BJ (cell line): ENCODE measurements at regions of chr13 and their contacts with region 1.

Region 1: GRCh38 chr13:27826379-27827353 is 34.4 kb downstream of the GSX1 start:
- DNase-seq: peak; percentile 16
- H3K4me3 ChIP-seq: no peak overlapping the region
- H3K27me3 ChIP-seq: peaks cover 7% of the 10 kb centered on the region
- CTCF ChIP-seq: peak; percentile 91

Region 2: DNA sequence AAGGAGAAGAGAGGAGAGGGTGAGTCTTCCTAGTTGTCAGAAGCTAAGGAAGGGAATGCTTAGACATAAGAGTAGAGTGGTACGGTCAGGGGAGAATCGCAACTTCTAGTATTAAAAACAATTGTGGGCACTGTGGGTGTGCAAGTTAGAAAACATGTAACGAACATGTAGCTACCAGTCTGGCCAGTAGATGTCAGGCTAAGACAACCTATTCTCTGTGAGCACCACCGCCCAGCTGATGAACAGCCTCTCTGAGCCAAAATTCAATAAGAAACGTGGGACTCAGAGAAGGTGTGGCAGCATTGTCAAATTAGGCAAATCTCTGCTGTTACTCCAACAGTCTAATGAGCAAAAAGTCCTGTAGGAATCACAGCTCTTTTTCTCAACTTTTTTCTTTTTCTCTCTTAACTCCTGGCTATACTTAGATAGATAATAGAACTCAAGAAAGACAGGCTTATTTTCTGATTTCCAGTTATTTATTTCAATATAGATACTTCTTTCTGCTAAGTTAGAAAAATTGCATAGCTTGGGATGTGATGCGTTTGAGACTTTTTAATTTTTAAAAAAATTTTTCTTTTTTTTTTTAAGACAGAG is 841.3 kb before region 1 on chr13:
- CTCF ChIA-PET with region 1: interaction called, 12 read pairs
- POLR2A ChIA-PET with region 1: no interaction called
- DNase-seq: no peak
- H3K4me3 ChIP-seq: no peak overlapping the region
- H3K27me3 ChIP-seq: no peaks in the 10 kb centered on the region; the same call in 1 of the 2 replicates
- CTCF ChIP-seq: peak; percentile 65

Region 3: GRCh38 chr13:27379694-27380641 is 446.7 kb before region 1 on chr13:
- CTCF ChIA-PET with region 1: interaction called, 168 read pairs
- POLR2A ChIA-PET with region 1: no interaction called
- DNase-seq: no peak
- H3K4me3 ChIP-seq: no peak overlapping the region
- H3K27me3 ChIP-seq: peaks cover 19% of the 10 kb centered on the region
- CTCF ChIP-seq: peak; percentile 68

Region 4: DNA sequence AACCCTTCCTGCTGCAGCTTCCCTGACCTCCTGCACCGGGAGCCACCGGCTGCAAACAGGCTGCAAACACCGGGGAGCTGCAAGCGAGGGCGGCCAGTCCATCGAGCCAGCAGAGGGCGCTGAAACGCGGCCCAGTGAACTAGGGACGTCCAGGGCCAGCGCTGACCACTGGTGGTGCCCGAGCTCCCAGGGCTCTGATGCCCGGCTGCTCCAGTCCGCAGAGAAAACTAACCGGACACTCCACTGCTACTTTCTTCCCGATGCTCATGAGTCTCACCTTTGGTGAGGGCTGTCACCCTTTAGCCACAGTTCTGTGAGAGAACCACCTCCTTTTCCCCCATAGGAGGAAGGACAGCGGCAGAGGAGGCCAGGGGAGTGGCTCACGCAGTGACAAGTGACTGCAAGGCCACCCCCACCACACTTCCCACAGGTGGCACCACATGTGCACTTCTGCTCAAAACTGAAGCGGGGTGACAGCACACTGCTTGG is 293.5 kb before region 1 on chr13:
- CTCF ChIA-PET with region 1: interaction called, 166 read pairs
- POLR2A ChIA-PET with region 1: interaction called, 4 read pairs
- DNase-seq: no peak
- H3K4me3 ChIP-seq: no peak overlapping the region
- H3K27me3 ChIP-seq: 0 out of 2 replicates have a peak, but pooled peaks cover 3% of the 10 kb centered on the region
- CTCF ChIP-seq: peak; percentile 99

Region 5: GRCh38 chr13:27810461-27810860 is 16.2 kb before region 1 on chr13:
- CTCF ChIA-PET with region 1: interaction called, 76 read pairs
- POLR2A ChIA-PET with region 1: no interaction called
- DNase-seq: no peak
- H3K4me3 ChIP-seq: no peak overlapping the region
- H3K27me3 ChIP-seq: peaks cover 8% of the 10 kb centered on the region
- CTCF ChIP-seq: no peak

Region 6: GRCh38 chr13:27962128-27962841 is 135.6 kb after region 1 on chr13:
- CTCF ChIA-PET with region 1: interaction called, 14 read pairs
- POLR2A ChIA-PET with region 1: interaction called, 4 read pairs
- DNase-seq: no peak
- H3K4me3 ChIP-seq: no peak overlapping the region
- H3K27me3 ChIP-seq: peaks cover 49% of the 10 kb centered on the region
- CTCF ChIP-seq: no peak

Region 7: GRCh38 chr13:28394422-28394821 is 567.8 kb after region 1 on chr13:
- CTCF ChIA-PET with region 1: no interaction called
- POLR2A ChIA-PET with region 1: no interaction called
- DNase-seq: no peak
- H3K4me3 ChIP-seq: no peak overlapping the region
- H3K27me3 ChIP-seq: no peaks in the 10 kb centered on the region
- CTCF ChIP-seq: no peak